CD4-positive, alpha-beta T cell (primary cell): ENCODE measurements at regions of chr3 and their contacts with region 1.

Region 1: GRCh38 chr3:100400780-100401673 is at the starts of genes LNP1 and TOMM70:
- DNase-seq: peak; percentile 86 to 97 (median 92)
- ATAC-seq: peak; percentile 88
- H3K4me3 ChIP-seq: peak within 1 kb of the TSS; percentile 73
- H3K4me3 Mint-ChIP-seq: peak within 1 kb of the TSS; percentile 94
- H3K27ac ChIP-seq: peak within 1 kb of the TSS; percentile 76 to 85
- H3K27ac Mint-ChIP-seq: peak within 1 kb of the TSS; percentile 92
- H3K4me1 ChIP-seq: peaks cover 26% of the 10 kb centered on the region
- H3K4me1 Mint-ChIP-seq: peaks cover 84% of the 10 kb centered on the region
- H3K27me3 ChIP-seq: no peaks in the 10 kb centered on the region
- H3K27me3 Mint-ChIP-seq: no peaks in the 10 kb centered on the region
- CTCF ChIP-seq: no peak
- total RNA-seq, gene LNP1: 0.47 to 0.70 TPM
- total RNA-seq, gene TOMM70: 20.9 to 21.6 TPM

Region 2: GRCh38 chr3:98901392-98902350 is 1499.4 kb before region 1 on chr3 and contains the start of gene DCBLD2:
- CTCF ChIA-PET with region 1: no interaction called
- POLR2A ChIA-PET with region 1: interaction called, 4 read pairs
- intact Hi-C with region 1: loop called in 1 of 2 experiments (anchors 10 kb)
- DNase-seq: peak; percentile 79 to 96 (median 88)
- ATAC-seq: peak; percentile 98
- H3K4me3 ChIP-seq: peak within 1 kb of the TSS; percentile 67
- H3K4me3 Mint-ChIP-seq: peak within 1 kb of the TSS; percentile 93
- H3K27ac ChIP-seq: peak within 1 kb of the TSS in 1 of 2 donors; percentile 45
- H3K27ac Mint-ChIP-seq: peak within 1 kb of the TSS; percentile 76
- H3K4me1 ChIP-seq: peaks cover 13% of the 10 kb centered on the region
- H3K4me1 Mint-ChIP-seq: peaks cover 26% of the 10 kb centered on the region
- H3K27me3 ChIP-seq: peaks cover 0 to 2% of the 10 kb centered on the region in 2 experiments
- H3K27me3 Mint-ChIP-seq: peaks cover 12% of the 10 kb centered on the region
- CTCF ChIP-seq: no peak
- total RNA-seq, gene DCBLD2: 2.2 to 2.5 TPM

Region 3: DNA sequence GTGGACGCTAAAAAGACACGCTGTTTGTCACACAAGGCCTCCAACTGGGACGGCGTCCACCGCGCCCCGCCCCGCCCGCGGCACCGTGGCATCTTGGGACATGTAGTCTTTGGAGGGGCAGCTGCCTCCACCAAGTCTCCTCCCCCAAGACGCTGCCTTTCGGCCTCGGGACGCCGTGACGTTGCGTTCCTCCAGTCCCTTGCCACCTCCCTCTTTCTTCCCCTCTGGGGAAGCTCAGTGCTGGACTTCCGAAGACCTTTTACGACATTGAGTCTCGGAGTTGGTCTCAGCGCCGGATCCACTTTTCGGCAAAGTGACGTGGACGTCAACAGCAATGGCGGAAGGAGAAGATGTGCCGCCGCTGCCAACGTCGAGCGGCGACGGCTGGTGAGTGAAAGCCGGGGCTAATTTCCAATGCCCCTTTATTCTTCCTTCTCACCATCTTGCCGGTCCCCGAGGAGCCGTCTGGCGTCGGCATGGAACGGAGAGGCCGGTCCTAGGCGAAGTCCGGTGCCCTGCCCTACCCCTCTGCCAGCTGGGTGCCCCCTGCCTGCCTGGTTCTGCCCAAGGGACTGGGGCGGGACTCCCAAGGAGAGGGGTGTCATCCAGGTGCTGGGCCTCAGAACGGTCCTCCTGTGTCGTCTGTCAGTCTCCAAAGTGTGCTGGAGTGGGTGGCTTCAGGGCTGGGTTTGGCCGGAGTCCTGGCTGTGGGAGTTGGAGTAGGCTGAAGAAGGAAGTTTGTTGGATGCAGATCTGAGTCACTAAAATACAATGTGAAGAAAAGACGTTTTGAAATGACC is 140.1 kb before region 1 on chr3 and contains the start of gene TBC1D23:
- CTCF ChIA-PET with region 1: no interaction called
- POLR2A ChIA-PET with region 1: interaction called, 34 read pairs
- intact Hi-C with region 1: loop called (anchors 2 kb)
- DNase-seq: peak; percentile 93 to 99 (median 96)
- ATAC-seq: peak; percentile 99
- H3K4me3 ChIP-seq: peak within 1 kb of the TSS; percentile 96
- H3K4me3 Mint-ChIP-seq: peak within 1 kb of the TSS; percentile 96
- H3K27ac ChIP-seq: peak within 1 kb of the TSS; percentile 78 to 97
- H3K27ac Mint-ChIP-seq: peak within 1 kb of the TSS; percentile 94
- H3K4me1 ChIP-seq: peaks cover 26% of the 10 kb centered on the region
- H3K4me1 Mint-ChIP-seq: peaks cover 64% of the 10 kb centered on the region
- H3K27me3 ChIP-seq: no peaks in the 10 kb centered on the region
- H3K27me3 Mint-ChIP-seq: no peaks in the 10 kb centered on the region
- CTCF ChIP-seq: no peak
- total RNA-seq, gene TBC1D23: 31.8 to 34.8 TPM

Region 4: DNA sequence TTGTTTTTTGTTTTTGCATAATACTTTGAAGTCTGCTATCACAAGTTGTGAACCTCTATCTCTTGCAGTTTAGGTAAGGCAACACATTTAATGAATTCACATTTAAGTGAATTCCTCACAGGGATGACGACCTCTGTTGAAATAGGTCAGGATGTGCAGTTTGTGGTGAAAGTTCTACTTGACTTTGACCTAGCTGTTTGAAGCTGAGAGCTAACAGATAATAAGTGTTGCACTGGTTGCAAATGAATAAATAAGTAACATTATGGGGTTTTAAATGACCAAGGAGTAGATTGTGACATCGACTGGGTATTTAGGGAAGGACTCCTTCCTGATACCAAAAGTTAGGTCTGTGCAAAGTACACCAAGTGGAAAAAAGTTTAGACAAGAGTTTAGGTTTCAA is 42.6 kb before region 1 on chr3:
- CTCF ChIA-PET with region 1: no interaction called
- POLR2A ChIA-PET with region 1: no interaction called
- intact Hi-C with region 1: loop called in 1 of 2 experiments (anchors 2 kb)
- DNase-seq: no peak
- ATAC-seq: no peak
- H3K4me3 ChIP-seq: no peak overlapping the region
- H3K4me3 Mint-ChIP-seq: no peak overlapping the region
- H3K27ac ChIP-seq: no peak overlapping the region
- H3K27ac Mint-ChIP-seq: peak overlapping the region; percentile 12
- H3K4me1 ChIP-seq: no peaks in the 10 kb centered on the region
- H3K4me1 Mint-ChIP-seq: no peaks in the 10 kb centered on the region
- H3K27me3 ChIP-seq: no peaks in the 10 kb centered on the region
- H3K27me3 Mint-ChIP-seq: no peaks in the 10 kb centered on the region
- CTCF ChIP-seq: no peak

Region 5: GRCh38 chr3:100440895-100441294 is 39.9 kb after region 1 on chr3:
- CTCF ChIA-PET with region 1: no interaction called
- POLR2A ChIA-PET with region 1: interaction called, 10 read pairs
- intact Hi-C with region 1: no loop called
- DNase-seq: peak in 4 of 14 experiments; percentile 4 to 19 (median 10)
- ATAC-seq: peak; percentile 58
- H3K4me3 ChIP-seq: no peak overlapping the region
- H3K4me3 Mint-ChIP-seq: no peak overlapping the region
- H3K27ac ChIP-seq: no peak overlapping the region
- H3K27ac Mint-ChIP-seq: no peak overlapping the region
- H3K4me1 ChIP-seq: peaks cover 7% of the 10 kb centered on the region
- H3K4me1 Mint-ChIP-seq: peaks cover 9% of the 10 kb centered on the region
- H3K27me3 ChIP-seq: no peaks in the 10 kb centered on the region
- H3K27me3 Mint-ChIP-seq: no peaks in the 10 kb centered on the region
- CTCF ChIP-seq: no peak

Region 6: GRCh38 chr3:100708967-100709841 is 308.2 kb after region 1 on chr3 and contains the start of gene TFG:
- CTCF ChIA-PET with region 1: no interaction called
- POLR2A ChIA-PET with region 1: interaction called, 10 read pairs
- intact Hi-C with region 1: loop called (anchors 2 to 5 kb)
- DNase-seq: peak; percentile 94 to 100 (median 96)
- ATAC-seq: peak; percentile 91
- H3K4me3 ChIP-seq: peak within 1 kb of the TSS; percentile 73
- H3K4me3 Mint-ChIP-seq: peak within 1 kb of the TSS; percentile 97
- H3K27ac ChIP-seq: peak within 1 kb of the TSS; percentile 77 to 94
- H3K27ac Mint-ChIP-seq: peak within 1 kb of the TSS; percentile 97
- H3K4me1 ChIP-seq: peaks cover 24% of the 10 kb centered on the region
- H3K4me1 Mint-ChIP-seq: peaks cover 49% of the 10 kb centered on the region
- H3K27me3 ChIP-seq: no peaks in the 10 kb centered on the region
- H3K27me3 Mint-ChIP-seq: peaks cover 16% of the 10 kb centered on the region
- CTCF ChIP-seq: no peak
- total RNA-seq, gene TFG: 56.5 to 58.8 TPM

Region 7: DNA sequence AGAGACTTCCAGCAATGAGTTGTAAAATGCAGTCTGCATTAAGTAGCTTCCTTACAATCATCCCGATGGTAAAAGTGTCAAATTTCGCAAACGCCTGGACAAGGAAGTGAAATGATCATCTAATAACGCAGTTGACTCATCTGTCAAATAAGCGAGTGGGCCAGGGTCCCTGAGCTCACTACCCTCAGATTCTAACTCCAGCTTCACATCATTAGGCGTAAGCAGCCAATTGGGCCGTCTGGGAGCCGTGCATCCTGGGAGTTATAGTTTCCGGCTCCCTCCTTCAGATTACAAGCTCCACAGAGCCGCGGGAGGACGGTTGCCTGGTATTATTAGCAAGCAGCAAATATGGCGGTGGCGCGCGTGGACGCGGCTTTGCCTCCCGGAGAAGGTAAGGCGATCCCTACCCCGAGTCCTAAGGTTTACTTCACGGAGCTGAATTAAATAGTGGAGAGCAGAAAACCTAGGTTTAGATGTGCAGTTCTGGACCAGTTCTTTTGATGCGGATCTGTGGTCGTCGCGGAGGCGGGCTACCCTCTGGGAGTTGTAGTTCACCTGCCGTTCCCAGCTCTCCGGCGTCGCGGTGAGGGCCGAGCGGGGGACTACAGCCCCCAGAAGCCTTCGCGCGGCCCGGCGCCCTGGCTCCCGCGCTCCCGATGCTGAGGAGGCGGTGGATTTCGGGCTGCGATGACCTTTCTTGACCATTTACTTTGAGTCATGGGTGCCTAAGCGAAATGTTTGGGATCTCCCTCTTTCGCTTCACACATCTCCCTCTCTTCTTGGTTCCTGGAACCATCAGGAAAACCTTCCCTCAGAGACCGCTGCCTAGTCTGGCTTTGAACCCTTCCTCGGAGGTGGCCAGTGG is 1323.5 kb after region 1 on chr3 and contains the start of gene CEP97:
- CTCF ChIA-PET with region 1: no interaction called
- POLR2A ChIA-PET with region 1: no interaction called
- intact Hi-C with region 1: loop called in 1 of 2 experiments (anchors 5 kb)
- DNase-seq: peak; percentile 75 to 92 (median 80)
- ATAC-seq: peak; percentile 94
- H3K4me3 ChIP-seq: peak within 1 kb of the TSS; percentile 99
- H3K4me3 Mint-ChIP-seq: peak within 1 kb of the TSS; percentile 97
- H3K27ac ChIP-seq: peak within 1 kb of the TSS; percentile 75 to 81
- H3K27ac Mint-ChIP-seq: peak within 1 kb of the TSS; percentile 89
- H3K4me1 ChIP-seq: peaks cover 42% of the 10 kb centered on the region
- H3K4me1 Mint-ChIP-seq: peaks cover 46% of the 10 kb centered on the region
- H3K27me3 ChIP-seq: no peaks in the 10 kb centered on the region
- H3K27me3 Mint-ChIP-seq: no peaks in the 10 kb centered on the region
- CTCF ChIP-seq: no peak
- total RNA-seq, gene CEP97: 6.3 to 6.6 TPM